ENCODE measurements at regions of chr19 and their contacts with region 1.

Region 1: GRCh38 chr19:21519488-21519887 is 14.1 kb downstream of the ZNF429 start:
- DNase-seq: peak in 1 of 9 experiments; percentile 24
- ATAC-seq: no peak
- H3K4me3 ChIP-seq: peak overlapping the region in 1 of 2 experiments; percentile 13
- H3K4me3 Mint-ChIP-seq: no peak overlapping the region
- H3K27ac ChIP-seq: no peak overlapping the region
- H3K27ac Mint-ChIP-seq: no peak overlapping the region
- H3K4me1 ChIP-seq: no peaks in the 10 kb centered on the region
- H3K4me1 Mint-ChIP-seq: peaks cover 35% of the 10 kb centered on the region
- H3K27me3 ChIP-seq: no peaks in the 10 kb centered on the region
- H3K27me3 Mint-ChIP-seq: no peaks in the 10 kb centered on the region
- CTCF ChIP-seq: no peak

Region 2: DNA sequence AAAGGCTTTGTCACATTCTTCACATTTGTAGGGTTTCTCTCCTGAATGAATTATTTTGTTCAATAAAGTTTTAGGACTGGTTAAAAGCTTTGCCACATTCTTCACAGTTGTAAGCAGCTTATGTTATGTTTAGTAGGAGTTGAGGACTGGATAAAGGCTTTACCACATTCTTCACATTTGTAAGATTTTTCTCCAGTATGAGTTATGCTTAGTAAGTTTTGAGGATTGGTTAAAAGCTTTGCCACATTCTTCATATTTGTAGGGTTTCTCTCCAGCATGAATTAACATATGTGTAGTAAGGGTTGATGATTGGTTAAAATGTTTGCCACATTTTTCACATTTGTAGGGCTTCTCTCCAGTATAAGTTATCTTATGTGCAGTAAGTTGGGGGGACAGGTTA is 297.8 kb before region 1 on chr19:
- CTCF ChIA-PET with region 1: no interaction called
- POLR2A ChIA-PET with region 1: no interaction called
- intact Hi-C with region 1: no loop called
- DNase-seq: no peak
- ATAC-seq: no peak
- H3K4me3 ChIP-seq: no peak overlapping the region
- H3K4me3 Mint-ChIP-seq: no peak overlapping the region
- H3K27ac ChIP-seq: no peak overlapping the region
- H3K27ac Mint-ChIP-seq: no peak overlapping the region
- H3K4me1 ChIP-seq: no peaks in the 10 kb centered on the region
- H3K4me1 Mint-ChIP-seq: no peaks in the 10 kb centered on the region
- H3K27me3 ChIP-seq: no peaks in the 10 kb centered on the region
- H3K27me3 Mint-ChIP-seq: peaks cover 8% of the 10 kb centered on the region
- CTCF ChIP-seq: no peak

Region 3: GRCh38 chr19:21532904-21533303 is 13.4 kb after region 1 on chr19:
- CTCF ChIA-PET with region 1: no interaction called
- POLR2A ChIA-PET with region 1: no interaction called
- intact Hi-C with region 1: loop called in 1 of 2 experiments (anchors 1 kb)
- DNase-seq: no peak
- ATAC-seq: no peak
- H3K4me3 ChIP-seq: no peak overlapping the region
- H3K4me3 Mint-ChIP-seq: no peak overlapping the region
- H3K27ac ChIP-seq: no peak overlapping the region
- H3K27ac Mint-ChIP-seq: no peak overlapping the region
- H3K4me1 ChIP-seq: no peaks in the 10 kb centered on the region
- H3K4me1 Mint-ChIP-seq: no peaks in the 10 kb centered on the region
- H3K27me3 ChIP-seq: no peaks in the 10 kb centered on the region
- H3K27me3 Mint-ChIP-seq: no peaks in the 10 kb centered on the region
- CTCF ChIP-seq: no peak